Left cardiac atrium (tissue), 4 donors: ENCODE measurements at regions of chr5 and their contacts with region 1.

Region 1: GRCh38 chr5:97162045-97162444 is 19.6 kb upstream of the LIX1 start:
- DNase-seq: no peak
- ATAC-seq: peak; percentile 57 to 67

Region 2: DNA sequence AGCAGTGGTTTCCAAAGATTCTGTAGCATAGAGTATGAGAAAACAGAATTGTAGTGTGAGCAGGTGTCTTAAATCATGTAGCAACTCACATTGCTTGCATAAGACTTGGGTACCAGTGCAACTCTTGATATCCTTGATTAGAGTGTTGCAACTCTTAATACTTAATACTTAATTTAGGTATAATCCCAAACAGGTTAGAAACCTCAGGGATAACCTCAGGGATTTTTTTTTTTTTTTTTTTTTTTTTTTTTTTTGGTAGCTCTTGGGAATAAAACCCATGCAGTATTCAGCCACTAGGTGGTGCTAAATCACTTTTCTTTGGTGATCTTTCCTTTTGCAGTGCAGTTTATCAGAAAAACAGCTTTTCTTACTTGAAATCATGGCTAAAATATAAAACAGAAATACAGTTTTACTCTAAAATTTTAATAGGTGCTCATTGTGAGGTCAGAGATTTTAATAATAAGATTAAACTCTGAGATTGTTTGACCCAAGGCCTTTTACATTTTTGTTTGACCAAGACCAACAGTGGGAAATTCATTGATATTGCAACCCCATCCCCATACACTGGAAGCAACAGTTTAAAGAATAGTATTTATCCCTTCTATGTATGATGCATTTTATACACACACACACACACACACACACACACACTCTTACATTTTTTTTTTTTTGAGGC is 409.6 kb before region 1 on chr5:
- intact Hi-C with region 1: loop called in 1 of 2 experiments (anchors 5 kb)
- DNase-seq: no peak
- ATAC-seq: peak in 1 of 2 donors; percentile 9